ENCODE measurements at regions of chr17 and their contacts with region 1.

Region 1: GRCh38 chr17:409848-410545 is 57.4 kb upstream of the RPH3AL start:
- DNase-seq: peak; percentile 100
- ATAC-seq: peak; percentile 78
- H3K4me3 Mint-ChIP-seq: peak overlapping the region; percentile 81
- H3K27ac Mint-ChIP-seq: peak overlapping the region; percentile 55
- H3K4me1 Mint-ChIP-seq: peaks cover 19% of the 10 kb centered on the region
- H3K27me3 Mint-ChIP-seq: peaks cover 20% of the 10 kb centered on the region
- CTCF ChIP-seq: no peak

Region 2: DNA sequence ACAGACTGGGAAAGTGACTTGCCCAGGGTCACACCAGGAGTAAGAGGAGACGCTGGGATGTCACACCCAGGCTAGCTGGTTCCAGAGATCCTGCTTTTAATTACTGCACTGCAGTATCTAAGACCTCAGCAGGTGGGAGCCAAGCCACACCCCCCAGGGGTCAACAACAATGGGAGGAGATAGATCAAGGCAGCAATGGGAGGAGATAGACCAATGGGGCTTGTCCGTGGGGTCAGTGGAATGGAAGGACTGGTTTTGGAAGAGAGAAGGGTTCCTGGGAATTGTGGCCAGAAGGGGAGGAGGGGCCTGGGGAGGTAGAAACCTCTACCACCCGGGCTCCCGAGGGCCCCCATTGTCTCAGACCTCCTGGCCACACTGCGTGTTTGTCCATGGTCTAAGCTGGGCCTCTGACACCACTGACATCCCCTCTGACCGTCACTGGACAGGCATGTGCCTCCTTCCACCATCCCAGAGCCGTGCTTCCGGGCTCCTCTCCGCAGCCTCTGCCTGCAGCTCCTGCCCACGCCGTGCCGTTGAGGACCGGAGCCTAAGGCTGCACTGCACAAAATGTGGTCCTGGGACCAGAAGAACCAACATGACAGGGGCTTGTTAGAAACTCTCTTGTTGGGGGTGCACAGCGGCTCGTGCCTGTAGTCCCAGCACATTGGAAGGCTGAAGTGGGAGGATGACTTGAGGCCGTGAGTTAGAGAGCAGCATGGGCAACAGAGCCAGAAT is 12.4 kb after region 1 on chr17:
- CTCF ChIA-PET with region 1: interaction called, 33 read pairs
- POLR2A ChIA-PET with region 1: interaction called, 5 read pairs
- DNase-seq: no peak
- ATAC-seq: peak; percentile 67
- H3K4me3 Mint-ChIP-seq: no peak overlapping the region
- H3K27ac Mint-ChIP-seq: no peak overlapping the region
- H3K4me1 Mint-ChIP-seq: peaks cover 27% of the 10 kb centered on the region
- H3K27me3 Mint-ChIP-seq: peaks cover 2% of the 10 kb centered on the region; the same call in 1 of the 2 replicates
- CTCF ChIP-seq: no peak

Region 3: GRCh38 chr17:520447-521182 is 110.6 kb after region 1 on chr17:
- CTCF ChIA-PET with region 1: interaction called, 18 read pairs
- POLR2A ChIA-PET with region 1: no interaction called
- DNase-seq: no peak
- ATAC-seq: peak; percentile 37
- H3K4me3 Mint-ChIP-seq: no peak overlapping the region
- H3K27ac Mint-ChIP-seq: peak overlapping the region; percentile 91
- H3K4me1 Mint-ChIP-seq: peaks cover 37% of the 10 kb centered on the region
- H3K27me3 Mint-ChIP-seq: peaks cover 3% of the 10 kb centered on the region; the same call in 1 of the 2 replicates
- CTCF ChIP-seq: no peak

Region 4: GRCh38 chr17:538181-538973 is 128.4 kb after region 1 on chr17:
- CTCF ChIA-PET with region 1: interaction called, 10 read pairs
- POLR2A ChIA-PET with region 1: no interaction called
- DNase-seq: no peak
- ATAC-seq: no peak
- H3K4me3 Mint-ChIP-seq: no peak overlapping the region
- H3K27ac Mint-ChIP-seq: 0 out of 2 replicates have a peak overlapping the region, but pooled peaks have one; percentile 29
- H3K4me1 Mint-ChIP-seq: peaks cover 7% of the 10 kb centered on the region
- H3K27me3 Mint-ChIP-seq: no peaks in the 10 kb centered on the region
- CTCF ChIP-seq: no peak

Region 5: DNA sequence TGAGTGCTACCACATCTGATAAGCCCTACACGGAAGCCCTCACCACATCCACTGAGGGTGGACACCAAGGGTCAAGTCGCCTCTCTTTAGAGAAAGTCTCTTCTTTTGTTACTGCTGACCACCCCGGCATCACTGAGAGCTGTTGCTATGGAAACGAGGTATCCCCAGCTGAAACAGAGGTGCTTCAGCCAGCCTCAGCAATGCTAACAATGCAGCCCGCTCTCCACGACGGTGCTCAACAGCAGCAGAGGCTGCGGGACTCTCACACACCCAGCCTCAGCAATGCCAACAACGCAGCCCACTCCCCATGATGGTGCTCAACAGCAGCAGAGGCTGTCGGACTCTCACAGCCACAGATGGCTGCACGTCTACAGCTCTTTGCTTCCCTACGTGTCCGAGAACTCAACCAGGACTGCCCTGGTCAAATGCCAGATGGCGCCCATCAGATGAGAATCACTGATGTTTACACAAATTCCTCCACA is 263.2 kb after region 1 on chr17:
- CTCF ChIA-PET with region 1: interaction called, 10 read pairs
- POLR2A ChIA-PET with region 1: no interaction called
- DNase-seq: peak; percentile 65
- ATAC-seq: peak; percentile 94
- H3K4me3 Mint-ChIP-seq: no peak overlapping the region
- H3K27ac Mint-ChIP-seq: peak overlapping the region; percentile 95
- H3K4me1 Mint-ChIP-seq: peaks cover 26% of the 10 kb centered on the region
- H3K27me3 Mint-ChIP-seq: no peaks in the 10 kb centered on the region
- CTCF ChIP-seq: no peak

Region 6: DNA sequence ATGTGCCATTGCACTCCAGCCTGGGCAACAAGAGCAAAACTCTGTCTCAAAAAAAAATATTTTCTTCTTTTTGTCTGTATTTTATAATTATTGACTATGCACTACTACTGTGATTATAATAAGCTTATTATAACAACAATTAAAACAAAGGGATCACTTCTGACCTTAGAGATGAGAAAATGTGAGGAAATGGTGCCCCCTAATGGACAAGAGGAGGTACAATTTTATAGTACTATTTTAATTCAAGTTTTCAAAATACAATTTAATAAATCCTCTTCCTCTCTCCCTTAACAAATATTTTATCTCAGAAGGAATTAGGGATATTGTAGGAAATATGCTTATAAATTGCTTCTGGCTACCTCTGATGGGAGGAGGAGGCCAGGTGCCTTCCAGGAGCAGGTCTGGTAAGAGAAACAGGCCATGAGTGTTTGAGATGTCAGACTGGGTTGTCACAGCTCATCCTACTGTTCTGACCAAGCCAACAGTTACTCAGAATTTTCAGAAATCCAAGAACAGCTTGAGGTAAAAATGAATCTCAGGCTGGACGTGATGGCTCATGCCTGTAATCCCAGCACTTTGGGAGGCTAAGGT is 290.6 kb after region 1 on chr17:
- CTCF ChIA-PET with region 1: interaction called, 68 read pairs
- POLR2A ChIA-PET with region 1: no interaction called
- DNase-seq: no peak
- ATAC-seq: no peak
- H3K4me3 Mint-ChIP-seq: no peak overlapping the region
- H3K27ac Mint-ChIP-seq: no peak overlapping the region
- H3K4me1 Mint-ChIP-seq: no peaks in the 10 kb centered on the region
- H3K27me3 Mint-ChIP-seq: no peaks in the 10 kb centered on the region
- CTCF ChIP-seq: peak; percentile 28

Region 7: GRCh38 chr17:996554-997344 is 586.8 kb after region 1 on chr17 and contains the start of gene TIMM22:
- CTCF ChIA-PET with region 1: interaction called, 22 read pairs
- POLR2A ChIA-PET with region 1: no interaction called
- DNase-seq: peak; percentile 96
- ATAC-seq: peak; percentile 97
- H3K4me3 Mint-ChIP-seq: peak within 1 kb of the TSS; percentile 90
- H3K27ac Mint-ChIP-seq: peak within 1 kb of the TSS; percentile 99
- H3K4me1 Mint-ChIP-seq: peaks cover 8% of the 10 kb centered on the region
- H3K27me3 Mint-ChIP-seq: peaks cover 19% of the 10 kb centered on the region
- CTCF ChIP-seq: peak; percentile 79
- total RNA-seq, gene TIMM22: 17.2 to 18.0 TPM (median 17.4 TPM) in 3 replicates

Measured in WTC11 (cell line).